ENCODE measurements at regions of chr12 and their contacts with region 1.

Region 1: DNA sequence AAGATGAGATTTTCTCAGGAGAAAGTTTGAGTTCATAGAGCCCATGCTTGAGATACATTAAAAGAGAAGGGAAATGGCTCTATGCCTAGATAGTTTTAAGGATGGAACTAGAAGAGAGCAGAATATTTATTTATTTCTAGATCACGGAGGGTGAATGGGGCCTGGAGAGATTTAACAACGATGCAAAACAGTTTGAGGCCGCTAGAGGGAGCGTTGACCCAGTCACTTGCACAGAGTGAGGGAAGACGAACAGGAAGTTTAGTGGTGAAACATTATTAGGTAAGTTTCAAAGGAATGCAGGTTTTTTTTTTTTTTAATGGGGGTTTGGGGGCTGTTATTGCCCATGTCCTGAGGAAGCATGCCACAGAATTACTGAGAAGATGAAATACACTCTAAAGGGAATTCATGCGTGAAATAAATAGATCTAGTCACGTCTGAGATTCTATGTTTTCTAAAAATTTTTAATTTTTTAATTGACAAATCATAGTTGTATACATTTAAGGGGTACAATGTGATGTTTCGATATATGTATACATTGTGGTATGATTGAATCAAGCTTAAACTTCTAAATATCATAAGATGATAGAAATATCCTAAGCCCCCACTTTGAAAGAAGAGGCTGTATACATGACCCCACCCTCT is 14.8 kb upstream of the PPP1R1A start:
- DNase-seq: peak in 1 of 2 donors; percentile 41
- ATAC-seq: peak; percentile 33 to 83 (median 76)
- H3K4me3 ChIP-seq: no peak overlapping the region
- H3K27ac ChIP-seq: no peak overlapping the region
- H3K4me1 ChIP-seq: no peaks in the 10 kb centered on the region
- H3K27me3 ChIP-seq: peaks cover 0 to 12% (median 7%) of the 10 kb centered on the region in 7 donors
- CTCF ChIP-seq: peak; percentile 43 to 82 (median 74)

Region 2: DNA sequence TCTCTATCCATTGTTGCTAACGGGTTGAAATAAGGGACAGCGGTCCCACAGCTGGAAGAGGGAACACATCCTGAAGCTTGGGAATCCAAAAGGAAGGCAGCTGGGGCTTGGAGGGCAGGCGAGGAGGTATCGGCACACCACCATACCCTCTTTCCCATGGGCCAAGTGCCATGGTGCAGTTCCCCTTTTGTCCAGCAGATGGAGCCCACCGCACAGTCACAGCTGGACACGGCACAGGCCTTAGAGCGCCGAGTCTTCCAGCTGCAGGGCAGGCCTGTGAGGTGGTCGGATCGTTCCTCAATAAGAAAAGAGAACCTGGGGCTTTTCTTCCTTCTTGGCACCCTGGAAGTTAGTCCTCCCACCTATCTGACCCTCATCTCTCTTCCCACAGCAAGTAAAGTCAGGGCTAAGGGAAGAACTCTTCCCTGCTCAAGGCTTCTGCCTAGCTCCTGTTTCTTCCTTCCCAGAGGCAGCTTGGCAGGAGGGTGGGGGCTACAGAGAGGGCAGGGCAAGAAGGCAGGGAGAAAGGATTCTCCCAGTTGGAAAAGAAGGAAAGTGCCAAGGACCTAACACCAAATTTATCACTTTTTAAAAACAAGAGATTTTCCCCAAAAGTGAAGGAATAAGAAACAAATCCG is 23.5 kb before region 1 on chr12:
- intact Hi-C with region 1: loop called in 1 of 10 experiments (anchors 2 kb)
- DNase-seq: peak; percentile 86 to 87
- ATAC-seq: peak; percentile 87 to 97 (median 94)
- H3K4me3 ChIP-seq: no peak overlapping the region
- H3K27ac ChIP-seq: peak overlapping the region in 1 of 10 donors; percentile 22
- H3K4me1 ChIP-seq: peaks cover 0 to 8% (median 6%) of the 10 kb centered on the region in 9 donors
- H3K27me3 ChIP-seq: peaks cover 0 to 23% (median 8%) of the 10 kb centered on the region in 7 donors
- CTCF ChIP-seq: peak; percentile 96 to 100 (median 99)